Colonic mucosa (tissue), 4 donors: ENCODE measurements at regions of chr3 and their contacts with region 1.

Region 1: DNA sequence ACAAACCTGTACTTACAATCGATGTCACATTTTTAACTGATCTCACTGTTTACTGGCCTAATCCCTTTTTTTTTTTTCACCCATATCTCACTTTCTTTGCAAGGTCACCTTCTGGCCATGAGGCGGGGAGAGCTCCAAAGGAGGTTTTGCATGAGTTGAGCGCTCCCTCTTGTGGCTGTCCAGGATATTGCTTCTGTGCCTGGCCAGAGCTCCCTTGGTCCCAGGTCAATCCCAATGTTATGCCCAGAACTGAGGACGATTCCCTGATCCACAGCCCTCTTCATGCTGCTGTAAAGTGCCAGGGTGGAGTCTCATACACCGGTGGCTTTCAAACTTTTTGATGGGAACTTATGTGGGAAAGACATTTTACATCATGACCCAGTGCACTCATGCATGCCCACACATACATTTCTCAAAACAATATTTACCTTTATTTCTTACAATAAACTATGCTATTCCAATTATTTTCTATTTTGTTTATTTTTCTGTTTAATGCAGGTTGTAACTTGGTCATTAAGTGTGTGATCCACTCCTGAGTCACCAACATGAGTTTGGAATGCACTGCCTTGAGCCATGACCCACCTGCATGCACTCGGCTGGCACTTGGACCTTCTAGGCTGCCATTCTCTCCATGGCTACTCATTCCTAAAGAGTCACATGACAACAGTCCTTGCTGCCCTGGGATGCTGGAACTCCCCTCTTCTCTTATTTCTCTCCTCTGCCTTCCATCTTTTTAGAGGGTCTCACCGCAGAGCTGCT is 9.6 kb upstream of the SST start:
- DNase-seq: peak; percentile 78
- H3K4me3 ChIP-seq: no peak overlapping the region
- H3K27ac ChIP-seq: no peak overlapping the region
- H3K4me1 ChIP-seq: no peaks in the 10 kb centered on the region
- H3K27me3 ChIP-seq: no peaks in the 10 kb centered on the region
- CTCF ChIP-seq: peak; percentile 91

Region 2: DNA sequence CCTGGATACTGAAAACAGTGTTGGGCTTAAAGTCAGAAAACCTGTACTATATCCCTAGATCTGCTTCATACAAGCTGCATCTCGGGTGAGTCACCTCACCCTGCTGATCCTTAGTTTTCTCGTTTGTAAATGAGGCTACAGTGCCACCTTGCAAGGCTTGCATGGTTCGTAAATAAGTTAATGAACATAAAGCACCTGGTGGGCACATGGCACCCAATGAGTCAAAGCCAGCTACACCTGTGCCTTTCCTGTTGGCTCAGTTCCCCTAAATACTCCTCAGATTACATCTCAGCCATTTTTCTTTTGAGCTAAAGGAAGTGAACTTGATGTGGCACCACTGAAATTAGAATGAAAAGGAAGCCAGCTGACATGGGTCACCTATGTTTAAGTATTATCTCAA is 456.0 kb before region 1 on chr3:
- intact Hi-C with region 1: loop called (anchors 2 kb)
- DNase-seq: no peak
- H3K4me3 ChIP-seq: no peak overlapping the region
- H3K27ac ChIP-seq: no peak overlapping the region
- H3K4me1 ChIP-seq: no peaks in the 10 kb centered on the region
- H3K27me3 ChIP-seq: no peaks in the 10 kb centered on the region
- CTCF ChIP-seq: no peak

Region 3: DNA sequence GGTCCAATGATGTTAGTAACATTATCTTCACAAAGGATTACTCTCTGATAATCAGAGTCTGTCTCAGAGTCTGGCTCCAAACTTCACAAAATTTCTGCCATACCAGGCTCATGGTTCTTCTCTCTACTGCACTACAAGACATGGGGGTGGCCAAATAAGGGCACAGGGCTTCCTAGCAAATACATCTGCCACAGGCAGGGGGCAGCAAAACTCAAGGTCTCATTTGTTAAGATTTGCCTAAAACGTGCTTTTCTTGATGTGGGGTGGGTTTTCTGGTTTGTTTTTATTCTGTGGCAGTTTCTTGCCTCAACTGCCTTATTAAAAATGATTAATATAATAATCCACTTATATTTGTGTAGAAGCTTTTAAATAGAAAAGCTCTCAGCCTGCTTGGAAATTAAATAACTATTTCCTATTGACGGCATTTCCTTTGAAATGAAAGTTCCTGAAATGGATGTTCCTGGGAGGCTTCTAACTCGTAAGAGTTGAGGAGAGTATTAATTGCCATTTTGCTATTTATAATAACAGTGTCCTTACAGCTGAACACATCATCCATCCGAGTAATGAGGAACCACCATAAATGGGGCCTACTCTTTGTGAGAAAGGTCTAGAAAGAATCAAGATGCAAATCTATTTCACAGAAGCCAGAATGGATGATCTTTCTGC is 63.4 kb before region 1 on chr3:
- intact Hi-C with region 1: loop called (anchors 5 kb)
- DNase-seq: peak; percentile 41
- H3K4me3 ChIP-seq: no peak overlapping the region
- H3K27ac ChIP-seq: no peak overlapping the region
- H3K4me1 ChIP-seq: no peaks in the 10 kb centered on the region
- H3K27me3 ChIP-seq: no peaks in the 10 kb centered on the region
- CTCF ChIP-seq: peak; percentile 56

Region 4: GRCh38 chr3:188123170-188123905 is 443.5 kb after region 1 on chr3:
- intact Hi-C with region 1: no loop called
- DNase-seq: no peak
- H3K4me3 ChIP-seq: no peak overlapping the region
- H3K27ac ChIP-seq: peak overlapping the region; percentile 28
- H3K4me1 ChIP-seq: no peaks in the 10 kb centered on the region
- H3K27me3 ChIP-seq: no peaks in the 10 kb centered on the region
- CTCF ChIP-seq: no peak